ENCODE measurements at regions of chr4 and their contacts with region 1.

Region 1: GRCh38 chr4:6942238-6942800 is 32.7 kb downstream of the TBC1D14 start:
- DNase-seq: peak in 4 of 5 donors; percentile 22 to 66 (median 56)
- H3K4me3 ChIP-seq: peak overlapping the region; percentile 52
- H3K4me3 Mint-ChIP-seq: peak overlapping the region; percentile 67 to 93 (median 78)
- H3K27ac ChIP-seq: peak overlapping the region; percentile 47
- H3K27ac Mint-ChIP-seq: peak overlapping the region; percentile 76 to 99 (median 88)
- H3K4me1 ChIP-seq: peaks cover 52% of the 10 kb centered on the region
- H3K4me1 Mint-ChIP-seq: peaks cover 67 to 88% (median 74%) of the 10 kb centered on the region in 3 donors
- H3K27me3 ChIP-seq: no peaks in the 10 kb centered on the region
- H3K27me3 Mint-ChIP-seq: no peaks in the 10 kb centered on the region

Region 2: DNA sequence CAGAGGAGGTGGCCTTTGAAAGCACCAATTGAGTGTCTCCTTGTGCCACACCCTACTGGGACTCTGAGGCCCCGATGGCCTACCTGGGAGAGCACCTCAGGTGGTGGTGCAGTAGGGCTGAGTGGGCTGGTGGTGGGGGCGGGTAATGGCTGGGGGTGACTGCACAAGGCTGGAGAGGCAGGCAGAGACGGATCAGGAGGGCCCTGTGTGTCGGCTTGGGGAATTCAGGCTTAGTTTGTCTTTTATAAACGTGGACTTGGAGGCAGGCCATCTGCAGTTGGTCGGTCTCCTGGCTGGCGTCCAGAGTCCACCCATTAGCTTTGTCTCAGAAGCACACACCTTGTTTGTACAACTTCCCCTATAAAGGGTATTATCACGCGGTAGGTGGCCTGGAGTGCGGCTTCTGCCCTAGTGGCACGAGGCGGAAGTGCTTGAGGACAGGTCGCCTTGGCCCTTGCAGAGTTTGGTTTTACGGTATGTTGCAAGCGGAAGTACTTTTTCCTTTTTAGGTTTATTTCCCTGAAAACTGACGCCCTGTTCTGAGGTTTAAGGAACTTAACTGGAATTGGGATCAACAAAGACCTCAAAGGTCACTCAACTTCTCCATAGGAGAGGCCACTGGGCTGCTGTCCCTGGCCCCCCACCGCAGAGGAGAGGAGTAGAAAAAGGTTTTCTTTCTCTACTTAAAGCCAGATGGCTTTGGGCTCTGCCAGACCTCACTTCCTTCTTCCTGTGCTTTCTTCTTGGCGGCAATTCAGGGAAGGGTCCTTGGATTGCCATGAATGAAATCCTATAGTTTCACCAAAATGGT is 24.7 kb before region 1 on chr4:
- CTCF ChIA-PET with region 1: interaction called, 10 read pairs
- POLR2A ChIA-PET with region 1: interaction called, 6 read pairs
- DNase-seq: peak in 1 of 5 donors; percentile 59
- H3K4me3 ChIP-seq: peak overlapping the region; percentile 20
- H3K4me3 Mint-ChIP-seq: peak overlapping the region; percentile 60 to 88 (median 68)
- H3K27ac ChIP-seq: peak overlapping the region; percentile 57
- H3K27ac Mint-ChIP-seq: peak overlapping the region; percentile 89 to 98 (median 94)
- H3K4me1 ChIP-seq: peaks cover 66% of the 10 kb centered on the region
- H3K4me1 Mint-ChIP-seq: peaks cover 64 to 90% (median 70%) of the 10 kb centered on the region in 3 donors
- H3K27me3 ChIP-seq: no peaks in the 10 kb centered on the region
- H3K27me3 Mint-ChIP-seq: no peaks in the 10 kb centered on the region

Region 3: DNA sequence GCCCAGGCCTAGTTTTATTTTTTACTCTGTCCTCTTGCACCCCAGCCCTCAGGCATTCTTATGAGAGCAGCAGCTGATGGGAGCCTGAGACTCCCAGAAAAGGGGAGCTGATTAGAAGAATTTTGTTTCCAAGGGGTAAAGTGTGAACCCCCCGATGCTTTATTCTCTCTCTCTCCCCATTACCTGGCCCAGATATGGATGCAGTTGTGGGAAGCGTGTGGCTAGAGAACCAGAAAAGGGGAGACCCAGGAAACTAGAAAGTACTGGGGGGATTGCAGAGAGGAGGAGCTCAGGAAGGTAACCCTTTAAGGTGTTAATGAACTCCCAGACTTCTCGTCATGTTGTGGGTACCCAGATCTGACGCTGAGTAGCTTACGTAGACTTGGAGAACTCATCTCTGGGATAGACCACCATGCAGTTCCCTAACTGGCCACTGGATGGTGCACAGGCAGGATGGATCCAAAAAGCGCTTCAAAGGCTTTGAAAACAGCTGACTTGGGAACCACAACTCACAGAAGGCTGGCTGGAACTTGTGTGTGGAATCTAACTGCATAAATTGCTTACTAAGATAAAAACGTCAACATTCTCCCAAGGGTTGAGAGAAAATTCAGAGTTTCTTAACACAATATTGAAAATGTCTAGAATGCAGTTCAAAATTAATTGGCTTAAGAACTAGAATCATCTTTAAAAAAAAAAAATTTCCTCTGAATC is 32.0 kb after region 1 on chr4:
- CTCF ChIA-PET with region 1: interaction called, 15 read pairs
- POLR2A ChIA-PET with region 1: interaction called, 3 read pairs
- DNase-seq: peak; percentile 63 to 85 (median 76)
- H3K4me3 ChIP-seq: no peak overlapping the region
- H3K4me3 Mint-ChIP-seq: no peak overlapping the region
- H3K27ac ChIP-seq: no peak overlapping the region
- H3K27ac Mint-ChIP-seq: peak overlapping the region; percentile 7 to 91 (median 62)
- H3K4me1 ChIP-seq: peaks cover 9% of the 10 kb centered on the region
- H3K4me1 Mint-ChIP-seq: peaks cover 19 to 27% (median 24%) of the 10 kb centered on the region in 3 donors
- H3K27me3 ChIP-seq: no peaks in the 10 kb centered on the region
- H3K27me3 Mint-ChIP-seq: no peaks in the 10 kb centered on the region

Measured in CD8-positive, alpha-beta memory T cell (primary cell).